Body of pancreas (tissue), 4 donors: ENCODE measurements at regions of chr22 and their contacts with region 1.

Region 1: DNA sequence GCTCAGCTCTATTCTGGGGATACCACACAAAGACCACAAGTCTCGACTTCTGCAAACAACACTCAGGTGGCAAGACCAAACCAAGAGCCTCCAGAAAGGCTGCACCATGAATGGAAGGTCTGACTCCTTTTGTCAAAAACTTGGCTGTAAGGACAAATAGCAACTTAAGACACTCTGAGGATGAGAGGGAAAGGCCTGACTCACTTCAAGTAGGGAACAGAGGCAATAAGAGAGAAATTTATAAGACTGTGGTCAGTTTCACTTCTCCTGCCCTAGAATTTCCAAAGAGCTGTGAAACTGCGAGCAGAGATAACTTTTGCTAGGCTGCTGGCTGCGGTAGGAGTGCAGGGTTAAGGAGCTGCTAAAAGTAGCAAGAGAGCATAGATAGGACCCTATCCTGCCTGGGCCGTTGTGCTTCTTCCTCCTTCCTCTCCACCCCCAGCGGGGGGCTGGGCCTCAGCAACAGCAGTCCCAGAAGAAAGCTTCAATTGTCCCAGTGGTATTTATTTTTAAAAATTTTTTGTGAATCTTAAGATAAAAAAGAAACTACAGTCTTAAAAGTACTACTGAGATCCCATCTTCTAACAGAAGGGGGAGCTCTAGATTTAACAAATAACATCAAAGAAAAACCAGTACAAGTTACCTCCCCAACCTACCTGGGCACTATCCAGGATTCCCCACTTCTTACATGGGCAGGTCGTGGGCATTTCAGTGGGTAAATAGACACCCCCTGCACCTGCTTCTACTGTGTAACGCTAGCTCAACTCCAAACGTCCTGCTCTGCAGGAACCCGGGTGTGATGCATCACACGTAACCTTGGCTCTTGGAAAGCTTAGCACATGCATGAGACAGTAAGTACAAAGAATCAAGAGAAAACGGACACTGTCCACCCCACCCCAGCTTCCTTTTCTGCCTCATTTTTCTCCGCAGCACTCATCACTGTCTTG is 66.4 kb downstream of the SGSM3 start:
- DNase-seq: peak in 2 of 4 donors; percentile 28 to 36
- ATAC-seq: peak; percentile 83
- H3K4me3 ChIP-seq: no peak overlapping the region
- H3K27ac ChIP-seq: peak overlapping the region in 2 of 4 donors; percentile 15 to 50
- H3K4me1 ChIP-seq: peaks cover 13% of the 10 kb centered on the region
- H3K27me3 ChIP-seq: no peaks in the 10 kb centered on the region
- CTCF ChIP-seq: peak; percentile 44 to 76 (median 70)
- POLR2A ChIP-seq: no peak

Region 2: GRCh38 chr22:40346178-40347118 is 90.3 kb before region 1 on chr22 and contains the start of gene ADSL:
- intact Hi-C with region 1: no loop called
- DNase-seq: peak; percentile 84 to 90 (median 86)
- ATAC-seq: peak; percentile 95
- H3K4me3 ChIP-seq: peak within 1 kb of the TSS; percentile 49 to 65
- H3K27ac ChIP-seq: peak within 1 kb of the TSS; percentile 30 to 89 (median 76)
- H3K4me1 ChIP-seq: peaks cover 15% of the 10 kb centered on the region
- H3K27me3 ChIP-seq: no peaks in the 10 kb centered on the region
- CTCF ChIP-seq: peak in 4 of 7 experiments; percentile 16 to 40 (median 28)
- POLR2A ChIP-seq: peak; percentile 62 to 91 (median 91)
- total RNA-seq, gene ADSL: 49.0 to 76.5 TPM

Region 3: DNA sequence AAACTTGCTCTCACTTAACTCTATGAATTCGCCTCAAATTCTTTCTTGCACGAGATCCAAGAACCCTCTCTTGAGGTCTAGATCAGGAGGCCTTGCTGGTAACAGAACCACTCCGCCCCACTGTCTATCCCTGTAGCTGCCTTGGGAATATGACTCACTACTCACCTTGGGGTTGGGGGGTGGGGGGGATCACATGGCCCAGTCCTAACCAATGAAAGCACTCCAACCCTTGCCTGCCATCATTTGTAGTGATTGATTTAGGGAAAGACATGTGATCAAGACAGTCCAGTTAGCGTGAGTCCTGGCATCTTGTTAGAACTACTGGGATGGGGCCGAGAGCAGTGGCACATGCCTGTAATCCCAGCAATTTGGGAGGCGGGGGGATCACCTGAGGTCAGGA is 204.5 kb after region 1 on chr22:
- intact Hi-C with region 1: loop called (anchors 5 kb)
- DNase-seq: peak in 1 of 4 donors; percentile 32
- ATAC-seq: no peak
- H3K4me3 ChIP-seq: no peak overlapping the region
- H3K27ac ChIP-seq: no peak overlapping the region
- H3K4me1 ChIP-seq: peaks cover 28% of the 10 kb centered on the region
- H3K27me3 ChIP-seq: no peaks in the 10 kb centered on the region
- CTCF ChIP-seq: no peak
- POLR2A ChIP-seq: no peak